Dorsolateral prefrontal cortex (tissue), 120 donors: ENCODE measurements at regions of chr5 and their contacts with region 1.

Region 1: GRCh38 chr5:63401436-63402046 is 560.7 kb downstream of the HTR1A start:
- DNase-seq: peak; percentile 36 to 83 (median 65)
- H3K4me3 ChIP-seq: no peak overlapping the region
- H3K27ac ChIP-seq: no peak overlapping the region
- H3K27me3 ChIP-seq: peaks cover 0 to 12% (median 0%) of the 10 kb centered on the region in 45 donors
- CTCF ChIP-seq: peak; percentile 41 to 85 (median 70)

Region 2: DNA sequence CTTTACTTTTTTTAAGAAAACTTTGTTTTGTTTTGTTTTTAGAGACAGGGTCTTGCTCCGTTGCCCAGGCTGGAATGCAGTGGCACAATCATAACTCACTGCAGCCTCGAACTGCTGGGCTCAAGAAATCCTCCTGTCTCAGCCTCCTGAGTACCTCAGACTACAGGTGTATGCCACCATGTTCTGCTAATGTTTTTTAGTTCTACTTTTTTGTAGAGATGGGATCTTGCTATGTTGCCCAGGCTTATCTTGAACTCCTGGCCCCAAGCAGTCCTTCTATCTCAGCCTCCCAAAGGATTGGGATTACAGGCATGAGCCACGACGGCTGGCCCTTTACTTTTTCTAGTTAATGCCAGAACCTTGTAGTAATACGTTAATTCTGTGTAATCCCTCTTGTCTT is 953.0 kb before region 1 on chr5:
- intact Hi-C with region 1: loop called in 1 of 2 experiments (anchors 10 kb)
- DNase-seq: no peak
- H3K4me3 ChIP-seq: no peak overlapping the region
- H3K27ac ChIP-seq: no peak overlapping the region
- H3K27me3 ChIP-seq: no peaks in the 10 kb centered on the region
- CTCF ChIP-seq: no peak

Region 3: GRCh38 chr5:64925123-64925522 is 1523.6 kb after region 1 on chr5:
- intact Hi-C with region 1: no loop called
- DNase-seq: no peak
- H3K4me3 ChIP-seq: no peak overlapping the region
- H3K27ac ChIP-seq: no peak overlapping the region
- H3K27me3 ChIP-seq: no peaks in the 10 kb centered on the region
- CTCF ChIP-seq: no peak